Heart left ventricle (tissue), 16 donors: ENCODE measurements at regions of chr4 and their contacts with region 1.

Region 1: GRCh38 chr4:118740869-118741268 is 55.7 kb downstream of the METTL14 start:
- DNase-seq: no peak
- ATAC-seq: no peak
- H3K4me3 ChIP-seq: peak overlapping the region in 7 of 12 donors; percentile 0 to 24 (median 9)
- H3K27ac ChIP-seq: peak overlapping the region; percentile 29 to 83 (median 64)
- H3K4me1 ChIP-seq: peaks cover 0 to 27% (median 14%) of the 10 kb centered on the region in 12 donors
- H3K27me3 ChIP-seq: no peaks in the 10 kb centered on the region
- CTCF ChIP-seq: peak; percentile 38 to 66 (median 50)
- POLR2A ChIP-seq: no peak

Region 2: GRCh38 chr4:118254368-118254767 is 486.5 kb before region 1 on chr4:
- intact Hi-C with region 1: no loop called
- DNase-seq: no peak
- ATAC-seq: no peak
- H3K4me3 ChIP-seq: no peak overlapping the region
- H3K27ac ChIP-seq: no peak overlapping the region
- H3K4me1 ChIP-seq: no peaks in the 10 kb centered on the region
- H3K27me3 ChIP-seq: peaks cover 0 to 2% (median 0%) of the 10 kb centered on the region in 9 donors
- CTCF ChIP-seq: no peak
- POLR2A ChIP-seq: no peak

Region 3: DNA sequence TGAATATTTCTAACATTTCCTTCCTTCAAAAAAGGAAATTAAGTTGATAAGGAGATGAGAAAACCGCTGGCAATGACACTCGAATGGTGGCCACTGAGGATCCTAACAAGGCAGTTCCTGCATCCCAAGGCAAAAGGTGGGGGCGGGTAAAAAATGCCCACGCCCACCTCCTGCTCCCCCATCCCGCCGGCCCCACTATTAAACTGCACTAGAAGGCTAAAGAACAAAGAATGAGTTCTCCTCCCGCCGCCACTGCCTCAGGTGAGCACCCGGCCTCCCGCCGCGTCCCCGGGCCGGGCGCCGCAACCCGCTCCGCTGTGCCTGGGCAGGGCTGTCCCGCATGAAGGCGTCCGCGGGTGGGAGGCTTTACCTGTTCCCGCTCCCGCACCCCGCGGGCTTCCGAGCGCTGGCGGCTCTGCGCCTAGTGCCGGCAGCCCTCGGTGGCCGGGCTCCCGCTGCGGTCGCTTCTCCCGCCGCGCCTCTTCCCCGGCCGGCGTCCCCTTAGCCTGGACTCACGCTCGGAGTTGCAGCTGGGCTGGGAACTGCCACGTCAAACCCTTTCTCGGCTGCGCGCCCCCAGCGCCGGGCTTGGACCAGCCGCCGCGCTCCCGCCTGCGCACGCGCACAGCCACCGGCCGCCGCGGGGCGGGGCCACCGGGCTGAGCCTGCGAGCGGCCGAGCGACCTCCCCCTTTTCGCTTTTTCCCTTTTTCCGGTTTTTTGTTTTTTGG is 94.9 kb after region 1 on chr4 and contains the start of gene SEC24D:
- intact Hi-C with region 1: loop called in 1 of 10 experiments (anchors 5 kb)
- DNase-seq: peak; percentile 89 to 95 (median 93)
- ATAC-seq: peak; percentile 83 to 97 (median 91)
- H3K4me3 ChIP-seq: peak within 1 kb of the TSS; percentile 74 to 100 (median 94)
- H3K27ac ChIP-seq: peak within 1 kb of the TSS; percentile 79 to 98 (median 93)
- H3K4me1 ChIP-seq: peaks cover 0 to 46% (median 24%) of the 10 kb centered on the region in 12 donors
- H3K27me3 ChIP-seq: no peaks in the 10 kb centered on the region
- CTCF ChIP-seq: peak in 4 of 12 donors; percentile 3 to 36 (median 22)
- POLR2A ChIP-seq: peak in 1 of 2 donors; percentile 75
- total RNA-seq, gene SEC24D: 13.3 to 36.4 (median 14.8) TPM

Region 4: DNA sequence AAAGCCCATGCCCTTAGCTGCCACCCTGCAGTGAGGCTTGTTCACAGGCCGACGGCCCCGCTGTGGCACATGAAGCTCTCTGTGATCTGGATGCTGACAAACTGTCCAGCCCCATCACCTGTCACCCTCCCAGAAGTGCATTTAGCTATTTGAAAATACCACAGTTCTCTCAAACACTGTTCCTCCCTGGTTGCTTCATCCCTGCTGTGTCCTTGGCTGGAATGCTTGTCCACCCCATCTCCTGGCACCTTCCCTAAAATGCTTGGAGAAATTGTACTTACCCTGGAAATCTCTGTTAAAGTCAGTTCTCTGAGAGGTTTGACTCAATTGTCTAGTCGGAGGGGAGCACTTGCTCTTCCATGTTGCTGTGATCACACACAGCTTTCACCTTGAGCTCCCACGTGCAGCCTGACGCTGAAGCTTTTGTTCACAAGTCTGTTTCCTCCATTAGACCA is 157.8 kb after region 1 on chr4:
- intact Hi-C with region 1: loop called in 2 of 10 experiments (anchors 10 kb)
- DNase-seq: peak; percentile 50 to 83 (median 69)
- ATAC-seq: peak; percentile 88 to 93 (median 91)
- H3K4me3 ChIP-seq: peak overlapping the region in 1 of 12 donors; percentile 6
- H3K27ac ChIP-seq: peak overlapping the region; percentile 58 to 93 (median 88)
- H3K4me1 ChIP-seq: peaks cover 0 to 79% (median 44%) of the 10 kb centered on the region in 12 donors
- H3K27me3 ChIP-seq: no peaks in the 10 kb centered on the region
- CTCF ChIP-seq: no peak
- POLR2A ChIP-seq: peak in 1 of 2 donors; percentile 25

Region 5: GRCh38 chr4:118968005-118968404 is 227.1 kb after region 1 on chr4:
- intact Hi-C with region 1: loop called in 9 of 10 experiments (anchors 2 to 10 kb)
- DNase-seq: peak in 4 of 5 donors; percentile 48 to 65 (median 58)
- ATAC-seq: peak; percentile 57 to 83 (median 76)
- H3K4me3 ChIP-seq: peak overlapping the region in 3 of 12 donors; percentile 4 to 18 (median 5)
- H3K27ac ChIP-seq: peak overlapping the region; percentile 38 to 86 (median 72)
- H3K4me1 ChIP-seq: peaks cover 2 to 87% (median 51%) of the 10 kb centered on the region in 12 donors
- H3K27me3 ChIP-seq: no peaks in the 10 kb centered on the region
- CTCF ChIP-seq: no peak
- POLR2A ChIP-seq: no peak

Region 6: DNA sequence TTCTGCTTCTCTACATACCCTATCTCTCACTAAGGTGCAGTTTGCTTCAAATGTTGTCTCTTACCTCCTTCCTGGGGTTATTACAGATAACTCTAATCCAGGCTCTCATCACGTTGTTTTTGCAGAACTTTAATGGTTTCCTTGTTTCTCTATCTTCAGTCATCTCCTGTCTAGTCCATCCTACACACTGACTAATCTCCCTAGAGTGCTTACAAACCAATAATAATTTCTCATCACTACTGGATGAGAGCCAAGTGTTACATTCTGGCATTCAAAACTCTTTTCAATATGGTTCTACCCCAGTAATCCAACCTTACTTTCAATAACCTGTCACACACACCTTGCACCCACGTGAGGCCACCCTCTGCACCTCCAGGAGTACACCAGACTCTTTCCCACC is 233.9 kb after region 1 on chr4:
- intact Hi-C with region 1: loop called in 9 of 10 experiments (anchors 2 to 10 kb)
- DNase-seq: no peak
- ATAC-seq: peak in 1 of 4 donors; percentile 27
- H3K4me3 ChIP-seq: no peak overlapping the region
- H3K27ac ChIP-seq: peak overlapping the region in 8 of 12 donors; percentile 1 to 71 (median 24)
- H3K4me1 ChIP-seq: peaks cover 0 to 73% (median 32%) of the 10 kb centered on the region in 12 donors
- H3K27me3 ChIP-seq: no peaks in the 10 kb centered on the region
- CTCF ChIP-seq: no peak
- POLR2A ChIP-seq: no peak

Region 7: DNA sequence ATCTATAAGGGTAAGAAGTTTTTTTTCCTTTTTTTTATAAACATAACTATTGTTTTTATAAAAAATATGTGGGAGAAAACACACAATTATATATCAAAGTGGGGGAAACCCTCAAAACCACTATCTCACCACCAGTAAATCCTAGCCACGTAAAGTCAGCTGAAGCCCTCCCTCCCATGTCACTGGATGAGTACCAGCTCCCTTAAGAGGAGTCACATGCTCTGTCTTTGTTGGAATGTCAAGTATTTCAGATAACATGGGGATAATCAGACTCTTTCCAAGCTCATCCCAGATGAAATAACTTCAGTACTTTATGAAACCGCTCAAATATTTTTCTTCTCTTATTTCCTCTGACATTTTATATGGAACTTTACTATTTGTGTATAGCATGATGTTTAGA is 397.2 kb after region 1 on chr4:
- intact Hi-C with region 1: loop called in 2 of 10 experiments (anchors 10 kb)
- DNase-seq: peak in 1 of 5 donors; percentile 41
- ATAC-seq: peak; percentile 52 to 72 (median 59)
- H3K4me3 ChIP-seq: peak overlapping the region; percentile 33 to 64 (median 48)
- H3K27ac ChIP-seq: peak overlapping the region; percentile 77 to 98 (median 88)
- H3K4me1 ChIP-seq: peaks cover 0 to 27% (median 8%) of the 10 kb centered on the region in 12 donors
- H3K27me3 ChIP-seq: no peaks in the 10 kb centered on the region
- CTCF ChIP-seq: no peak
- POLR2A ChIP-seq: no peak